Heart right ventricle (tissue), 16 donors: ENCODE measurements at regions of chr17 and their contacts with region 1.

Region 1: GRCh38 chr17:47760409-47761140 is 27.5 kb downstream of the TBX21 start:
- DNase-seq: no peak
- ATAC-seq: no peak
- H3K4me3 ChIP-seq: no peak overlapping the region
- H3K27ac ChIP-seq: no peak overlapping the region
- H3K4me1 ChIP-seq: no peaks in the 10 kb centered on the region
- H3K27me3 ChIP-seq: peaks cover 0 to 42% (median 11%) of the 10 kb centered on the region in 7 donors
- CTCF ChIP-seq: no peak

Region 2: DNA sequence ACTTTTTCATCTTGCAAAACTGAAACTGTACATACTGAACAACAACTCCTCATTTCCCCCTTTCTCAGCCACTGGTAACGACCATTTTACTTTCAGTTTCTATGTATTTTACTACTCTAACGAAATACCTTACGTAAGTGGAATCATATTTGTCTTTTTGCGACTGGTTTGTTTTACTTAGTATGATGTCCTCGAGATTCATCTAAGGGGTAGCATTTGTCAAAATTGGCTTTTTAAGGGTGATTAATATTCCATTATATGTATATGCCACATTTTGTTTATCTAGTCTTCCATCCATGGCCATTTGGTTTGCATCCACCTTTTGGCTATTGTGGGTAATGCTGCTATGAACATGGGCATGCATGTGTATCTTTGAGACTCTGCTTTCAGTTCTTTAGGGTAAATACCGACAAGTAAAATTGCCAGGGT is 100.5 kb before region 1 on chr17:
- intact Hi-C with region 1: no loop called
- DNase-seq: no peak
- ATAC-seq: no peak
- H3K4me3 ChIP-seq: peak overlapping the region in 1 of 10 donors; percentile 39
- H3K27ac ChIP-seq: peak overlapping the region in 2 of 10 donors; percentile 27 to 77
- H3K4me1 ChIP-seq: peaks cover 2 to 33% (median 11%) of the 10 kb centered on the region in 9 donors
- H3K27me3 ChIP-seq: no peaks in the 10 kb centered on the region
- CTCF ChIP-seq: no peak

Region 3: DNA sequence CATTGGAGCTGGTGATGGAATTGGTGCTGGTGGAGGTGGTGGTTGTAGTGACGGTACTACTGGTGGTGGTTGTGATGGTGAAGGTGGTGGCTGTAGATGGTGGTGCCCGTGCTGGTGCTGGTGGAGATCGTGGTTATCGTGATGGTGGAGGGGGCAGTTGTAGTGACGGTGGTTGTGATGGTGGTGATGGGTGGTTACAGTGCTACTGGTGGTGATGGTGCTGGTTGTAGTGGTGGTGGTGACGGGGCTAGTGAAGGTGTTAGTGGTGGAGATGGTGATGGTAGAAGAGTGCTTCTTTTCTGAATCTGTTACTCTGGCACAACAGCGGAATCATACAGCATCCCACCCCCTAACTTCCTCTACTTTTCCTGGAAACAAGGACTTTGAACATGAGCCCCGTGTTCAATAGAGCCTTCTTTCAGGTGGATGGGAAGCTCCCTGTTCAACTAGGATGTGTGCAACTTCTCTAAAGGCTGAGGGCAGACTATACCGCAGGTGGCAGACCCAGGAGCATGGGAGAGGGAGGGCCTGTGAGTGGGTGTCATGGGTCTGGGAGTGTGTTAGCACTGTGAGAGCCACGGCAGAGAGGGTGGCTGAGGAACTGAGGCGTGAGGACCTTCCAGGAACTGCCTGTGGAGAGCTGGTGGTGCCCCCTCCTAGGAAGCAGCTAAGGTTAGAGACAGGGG is 19.3 kb before region 1 on chr17:
- intact Hi-C with region 1: loop called in 1 of 10 experiments (anchors 2 kb)
- DNase-seq: no peak
- ATAC-seq: no peak
- H3K4me3 ChIP-seq: no peak overlapping the region
- H3K27ac ChIP-seq: no peak overlapping the region
- H3K4me1 ChIP-seq: peaks cover 0 to 8% (median 0%) of the 10 kb centered on the region in 9 donors
- H3K27me3 ChIP-seq: peaks cover 3 to 49% (median 45%) of the 10 kb centered on the region in 7 donors
- CTCF ChIP-seq: no peak